K562 (cell line): ENCODE measurements at regions of chr13 and their contacts with region 1.

Region 1: DNA sequence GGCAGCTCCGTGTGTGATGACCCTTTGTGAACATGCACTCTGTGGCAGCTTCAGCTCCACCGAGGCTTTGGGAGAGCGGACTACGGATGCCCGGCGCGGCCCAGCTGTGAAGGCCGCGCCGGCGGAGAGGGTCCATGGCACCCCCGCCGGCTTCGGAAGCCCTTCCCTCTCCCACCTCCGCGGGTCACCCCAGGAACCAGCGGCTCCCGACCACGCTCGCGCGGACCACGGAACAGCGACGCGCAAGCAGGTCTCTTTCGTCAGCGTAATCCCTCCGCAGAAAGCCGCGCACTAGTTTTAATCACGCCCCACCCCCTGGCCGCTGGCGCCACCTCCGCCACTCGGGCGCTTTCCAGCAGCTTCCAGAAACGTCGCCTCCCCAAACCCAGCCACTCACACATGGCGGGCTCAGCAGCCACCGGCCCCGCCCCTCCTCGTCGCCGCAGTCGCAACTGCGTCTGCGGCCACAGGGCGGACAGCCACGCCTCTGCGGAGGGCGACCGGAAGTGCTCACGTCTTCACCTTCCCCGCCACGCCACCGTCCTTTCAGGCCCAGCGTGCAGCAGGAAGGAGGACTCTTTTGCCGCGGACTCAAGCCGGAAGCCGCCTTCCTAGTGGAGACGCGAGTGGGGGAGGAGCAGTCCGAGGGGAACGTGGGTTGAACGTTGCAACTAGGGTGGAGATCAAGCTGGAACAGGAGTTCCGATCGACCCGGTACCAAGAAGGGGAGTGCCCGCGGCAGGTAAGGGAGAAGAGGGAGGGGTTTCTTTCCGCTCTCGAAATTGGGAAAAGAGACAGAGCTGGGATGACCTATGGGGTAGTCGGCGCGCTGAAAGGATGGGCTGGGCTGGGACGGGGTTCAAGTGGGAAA is at the start of gene USPL1:
- DNase-seq: peak; percentile 85 to 96 (median 88)
- ATAC-seq: peak; percentile 91
- H3K4me3 ChIP-seq: peak within 1 kb of the TSS; percentile 72
- H3K27ac ChIP-seq: peak within 1 kb of the TSS; percentile 99
- H3K4me1 ChIP-seq: peaks cover 5 to 7% of the 10 kb centered on the region in 2 experiments; a peak in 2 of 5 replicates
- H3K27me3 ChIP-seq: no peaks in the 10 kb centered on the region
- CTCF ChIP-seq: peak; percentile 2 to 18 (median 6); a peak in 2 of 6 replicates
- EP300 ChIP-seq: no peak
- POLR2A ChIP-seq: peak; percentile 85
- RAD21 ChIP-seq: no peak
- polyA plus RNA-seq, gene USPL1: 5.5 to 12.0 TPM

Region 2: DNA sequence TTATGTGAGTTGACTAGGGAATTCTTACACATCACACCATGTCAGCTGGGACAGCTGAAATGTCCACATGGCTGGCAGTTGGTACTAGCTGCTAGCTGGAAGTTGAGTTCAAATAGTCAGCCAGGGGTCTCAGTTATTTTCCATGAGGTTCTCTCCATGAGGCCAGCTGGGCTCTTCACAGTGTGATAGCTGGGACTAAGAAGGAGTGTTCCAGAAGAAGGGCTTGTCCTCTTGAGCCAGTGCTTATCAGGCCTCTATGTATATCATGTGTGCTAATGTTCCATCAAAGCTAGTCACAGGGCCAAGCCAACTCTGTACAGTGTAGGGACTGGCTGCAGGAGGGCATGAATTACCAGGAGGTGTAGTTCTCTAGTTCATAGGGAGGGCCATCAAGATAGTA is 12.0 kb after region 1 on chr13:
- CTCF ChIA-PET with region 1: no interaction called
- POLR2A ChIA-PET with region 1: interaction called, 10 read pairs
- in situ Hi-C with region 1: no loop called
- intact Hi-C with region 1: no loop called
- DNase-seq: no peak
- ATAC-seq: no peak
- H3K4me3 ChIP-seq: no peak overlapping the region
- H3K27ac ChIP-seq: no peak overlapping the region
- H3K4me1 ChIP-seq: no peaks in the 10 kb centered on the region; a peak in 1 of 5 replicates
- H3K27me3 ChIP-seq: no peaks in the 10 kb centered on the region
- CTCF ChIP-seq: no peak
- EP300 ChIP-seq: no peak
- POLR2A ChIP-seq: no peak
- RAD21 ChIP-seq: no peak

Region 3: DNA sequence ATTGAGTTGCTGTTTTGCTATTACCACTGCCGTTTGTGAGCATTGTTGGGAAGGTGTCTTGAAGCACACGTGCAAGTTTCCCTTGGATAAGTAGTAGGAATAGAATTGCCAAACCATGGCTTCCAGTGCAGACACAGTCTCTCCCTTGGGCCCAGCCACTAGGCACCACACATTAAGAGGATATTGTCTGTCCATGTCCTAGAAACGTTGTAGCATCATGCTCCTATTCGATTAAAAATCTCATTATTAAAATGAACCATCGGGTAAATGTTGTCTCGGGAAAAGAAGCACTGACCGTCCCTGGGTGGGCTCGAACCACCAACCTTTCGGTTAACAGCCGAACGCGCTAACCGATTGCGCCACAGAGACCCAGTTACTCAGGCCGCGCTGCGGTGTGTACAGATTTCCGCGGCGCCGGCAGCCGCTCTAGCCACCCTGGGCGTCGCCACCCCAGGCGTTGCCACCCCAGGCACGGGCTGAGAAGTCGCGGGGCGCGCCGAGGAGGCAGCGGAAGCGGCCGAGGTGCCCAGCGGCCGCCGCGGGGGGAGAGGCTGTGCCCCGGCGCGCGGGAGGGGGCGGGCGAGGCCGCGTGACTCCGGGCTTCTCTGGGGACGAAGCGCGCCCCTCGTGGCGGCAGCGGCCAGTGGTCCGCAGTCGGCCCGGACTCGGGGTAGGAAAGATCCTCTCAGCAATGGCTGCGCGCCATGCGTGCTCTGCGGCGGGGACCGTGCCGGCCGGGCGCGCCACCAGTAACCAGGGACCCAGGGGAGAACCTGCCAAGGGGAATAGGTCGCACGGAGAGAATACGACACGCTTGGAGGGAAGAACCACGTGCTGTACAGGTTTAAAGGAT is 56.3 kb after region 1 on chr13:
- CTCF ChIA-PET with region 1: no interaction called
- POLR2A ChIA-PET with region 1: no interaction called
- in situ Hi-C with region 1: no loop called
- intact Hi-C with region 1: loop called (anchors 5 kb)
- DNase-seq: peak; percentile 85 to 89 (median 86)
- ATAC-seq: peak; percentile 97
- H3K4me3 ChIP-seq: peak overlapping the region; percentile 57
- H3K27ac ChIP-seq: peak overlapping the region; percentile 81; the same call in 2 of the 3 replicates
- H3K4me1 ChIP-seq: peaks cover 5 to 9% of the 10 kb centered on the region in 2 experiments; a peak in 4 of 5 replicates
- H3K27me3 ChIP-seq: no peaks in the 10 kb centered on the region
- CTCF ChIP-seq: peak; percentile 53 to 77 (median 58)
- EP300 ChIP-seq: no peak
- POLR2A ChIP-seq: peak; percentile 51
- RAD21 ChIP-seq: peak; percentile 26 to 39; a peak in 3 of 4 replicates